ENCODE measurements at regions of chr11 and their contacts with region 1.

Region 1: GRCh38 chr11:65859200-65859811 is 927 bp upstream of the MUS81 start:
- DNase-seq: peak; percentile 89 to 100 (median 95)
- ATAC-seq: peak; percentile 64 to 65
- H3K4me3 Mint-ChIP-seq: peak overlapping the region; percentile 91 to 99 (median 96)
- H3K27ac Mint-ChIP-seq: peak overlapping the region; percentile 93 to 99 (median 96)
- H3K4me1 Mint-ChIP-seq: peaks cover 32 to 56% (median 52%) of the 10 kb centered on the region in 4 donors
- H3K27me3 Mint-ChIP-seq: no peaks in the 10 kb centered on the region

Region 2: GRCh38 chr11:65615229-65615941 is 243.9 kb before region 1 on chr11 and contains the start of gene PCNX3:
- POLR2A ChIA-PET with region 1: interaction called, 16 read pairs
- DNase-seq: peak; percentile 97 to 100 (median 100)
- ATAC-seq: peak; percentile 86 to 89
- H3K4me3 Mint-ChIP-seq: peak within 1 kb of the TSS; percentile 94 to 99 (median 96)
- H3K27ac Mint-ChIP-seq: peak within 1 kb of the TSS; percentile 94 to 99 (median 97)
- H3K4me1 Mint-ChIP-seq: peaks cover 22 to 55% (median 52%) of the 10 kb centered on the region in 4 donors
- H3K27me3 Mint-ChIP-seq: peaks cover 0 to 2% (median 0%) of the 10 kb centered on the region in 5 donors
- polyA plus RNA-seq, gene PCNX3: 0.96 to 6.5 (median 2.2) TPM

Region 3: GRCh38 chr11:65711785-65712632 is 147.3 kb before region 1 on chr11 and contains the start of gene KAT5:
- POLR2A ChIA-PET with region 1: interaction called, 17 read pairs
- DNase-seq: peak; percentile 93 to 100 (median 97)
- ATAC-seq: peak; percentile 86
- H3K4me3 Mint-ChIP-seq: peak within 1 kb of the TSS; percentile 92 to 100 (median 94)
- H3K27ac Mint-ChIP-seq: peak within 1 kb of the TSS; percentile 98 to 100 (median 99)
- H3K4me1 Mint-ChIP-seq: peaks cover 16 to 46% (median 35%) of the 10 kb centered on the region in 4 donors
- H3K27me3 Mint-ChIP-seq: no peaks in the 10 kb centered on the region
- polyA plus RNA-seq, gene KAT5: 38.0 to 57.3 (median 54.0) TPM

Region 4: GRCh38 chr11:65766535-65766934 is 92.8 kb before region 1 on chr11:
- POLR2A ChIA-PET with region 1: no interaction called
- DNase-seq: no peak
- ATAC-seq: no peak
- H3K4me3 Mint-ChIP-seq: no peak overlapping the region
- H3K27ac Mint-ChIP-seq: no peak overlapping the region
- H3K4me1 Mint-ChIP-seq: peaks cover 4 to 9% (median 6%) of the 10 kb centered on the region in 4 donors
- H3K27me3 Mint-ChIP-seq: no peaks in the 10 kb centered on the region

Region 5: GRCh38 chr11:65833297-65834030 is 25.8 kb before region 1 on chr11 and contains the start of gene SNX32:
- POLR2A ChIA-PET with region 1: interaction called, 38 read pairs
- DNase-seq: peak; percentile 89 to 97 (median 92)
- ATAC-seq: peak; percentile 99
- H3K4me3 Mint-ChIP-seq: no peak within 1 kb of the TSS
- H3K27ac Mint-ChIP-seq: peak within 1 kb of the TSS in 1 of 10 donors; percentile 67
- H3K4me1 Mint-ChIP-seq: peaks cover 8 to 16% (median 12%) of the 10 kb centered on the region in 4 donors
- H3K27me3 Mint-ChIP-seq: no peaks in the 10 kb centered on the region
- polyA plus RNA-seq, gene SNX32: 0.39 to 1.5 (median 0.40) TPM

Region 6: DNA sequence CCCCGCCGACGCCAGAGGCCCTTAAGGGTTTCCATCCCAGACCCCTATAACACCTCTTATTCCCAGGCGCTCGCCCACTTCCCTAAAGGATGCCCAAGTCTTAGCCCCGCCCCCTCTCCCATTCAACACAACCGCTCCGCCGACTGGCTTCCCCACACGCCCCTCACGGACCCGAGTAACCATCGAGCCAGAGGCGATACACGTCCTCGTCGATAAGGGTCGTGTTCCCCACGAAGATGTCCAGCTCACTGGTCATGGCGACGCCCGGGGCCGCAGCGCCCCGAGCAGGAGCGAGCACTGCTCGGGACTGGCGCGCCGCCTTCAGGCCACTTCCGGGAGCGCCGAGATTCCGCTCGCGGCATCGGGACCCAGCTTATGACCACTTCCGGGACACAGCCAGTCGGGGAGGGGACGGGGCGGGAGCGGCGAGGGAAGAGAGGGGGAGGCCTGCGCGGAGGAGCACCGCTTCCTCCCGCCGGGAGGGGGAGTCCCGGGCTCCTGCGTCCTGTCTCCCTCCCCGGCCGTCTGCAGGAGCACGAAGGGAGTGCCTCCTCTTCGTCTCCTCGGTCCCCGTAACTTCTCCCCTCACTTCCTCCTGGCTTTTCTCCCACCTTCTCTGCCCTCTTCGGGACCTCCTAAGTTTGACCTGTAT is 29.0 kb after region 1 on chr11 and contains the start of gene FIBP:
- POLR2A ChIA-PET with region 1: interaction called, 405 read pairs
- DNase-seq: peak; percentile 85 to 98 (median 91)
- ATAC-seq: peak; percentile 50 to 57
- H3K4me3 Mint-ChIP-seq: peak within 1 kb of the TSS; percentile 87 to 96 (median 90)
- H3K27ac Mint-ChIP-seq: peak within 1 kb of the TSS; percentile 94 to 100 (median 99)
- H3K4me1 Mint-ChIP-seq: peaks cover 38 to 79% (median 72%) of the 10 kb centered on the region in 4 donors
- H3K27me3 Mint-ChIP-seq: no peaks in the 10 kb centered on the region
- polyA plus RNA-seq, gene FIBP: 74.9 to 97.6 (median 86.0) TPM

Region 7: GRCh38 chr11:65919146-65920033 is 60.1 kb after region 1 on chr11 and contains the start of gene DRAP1:
- POLR2A ChIA-PET with region 1: interaction called, 21 read pairs
- DNase-seq: peak; percentile 95 to 100 (median 98)
- ATAC-seq: peak; percentile 86 to 92
- H3K4me3 Mint-ChIP-seq: peak within 1 kb of the TSS; percentile 88 to 97 (median 92)
- H3K27ac Mint-ChIP-seq: peak within 1 kb of the TSS; percentile 77 to 96 (median 92)
- H3K4me1 Mint-ChIP-seq: peaks cover 19 to 65% (median 48%) of the 10 kb centered on the region in 4 donors
- H3K27me3 Mint-ChIP-seq: no peaks in the 10 kb centered on the region
- polyA plus RNA-seq, gene DRAP1: 103 to 112 (median 110) TPM

Region 8: DNA sequence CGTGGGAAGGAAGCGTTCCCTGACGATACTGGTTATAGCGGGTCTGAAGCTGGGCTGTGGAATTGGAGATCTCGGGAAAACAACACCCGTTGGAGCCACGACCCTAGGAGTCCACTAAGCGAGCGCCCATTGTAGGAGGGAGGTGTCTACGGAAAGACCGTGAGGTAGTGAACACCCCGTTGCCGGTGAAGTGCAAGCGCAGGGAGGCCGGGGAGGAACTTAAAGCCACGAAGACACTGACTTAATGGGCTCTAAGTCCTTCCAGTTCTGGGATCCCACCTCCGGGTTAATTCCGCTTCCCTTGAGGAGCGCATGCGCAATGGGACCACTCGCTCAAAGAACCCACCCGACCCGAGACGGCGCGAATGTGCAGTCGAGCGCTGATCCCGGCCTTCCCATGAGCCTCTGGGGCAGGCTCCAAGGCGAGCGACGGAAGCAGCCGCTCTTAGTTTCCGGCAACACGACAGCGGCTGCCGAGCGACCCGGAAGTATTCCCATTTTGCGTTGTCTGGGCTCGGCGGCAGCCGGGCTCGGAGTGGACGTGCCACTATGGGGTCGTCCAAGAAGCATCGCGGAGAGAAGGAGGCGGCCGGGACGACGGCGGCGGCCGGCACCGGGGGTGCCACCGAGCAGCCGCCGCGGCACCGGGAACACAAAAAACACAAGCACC is 102.1 kb after region 1 on chr11 and contains the start of gene SART1:
- POLR2A ChIA-PET with region 1: interaction called, 20 read pairs
- DNase-seq: peak; percentile 91 to 99 (median 96)
- ATAC-seq: peak; percentile 91 to 93
- H3K4me3 Mint-ChIP-seq: peak within 1 kb of the TSS; percentile 93 to 99 (median 98)
- H3K27ac Mint-ChIP-seq: peak within 1 kb of the TSS; percentile 97 to 100 (median 98)
- H3K4me1 Mint-ChIP-seq: peaks cover 23 to 53% (median 51%) of the 10 kb centered on the region in 4 donors
- H3K27me3 Mint-ChIP-seq: no peaks in the 10 kb centered on the region
- polyA plus RNA-seq, gene SART1: 16.2 to 57.3 (median 30.4) TPM

Region 9: GRCh38 chr11:66336234-66337102 is 477.2 kb after region 1 on chr11 and contains the start of gene RIN1:
- POLR2A ChIA-PET with region 1: no interaction called
- DNase-seq: peak in 9 of 10 donors; percentile 12 to 80 (median 62)
- ATAC-seq: peak; percentile 81 to 86
- H3K4me3 Mint-ChIP-seq: peak within 1 kb of the TSS; percentile 89 to 96 (median 92)
- H3K27ac Mint-ChIP-seq: peak within 1 kb of the TSS; percentile 35 to 96 (median 92)
- H3K4me1 Mint-ChIP-seq: peaks cover 15 to 30% (median 24%) of the 10 kb centered on the region in 4 donors
- H3K27me3 Mint-ChIP-seq: no peaks in the 10 kb centered on the region
- polyA plus RNA-seq, gene RIN1: 2.7 to 6.5 (median 3.7) TPM